Heart right ventricle (tissue), 16 donors: ENCODE measurements at regions of chr4 and their contacts with region 1.

Region 1: GRCh38 chr4:140839888-140840790 is 84.0 kb upstream of the TBC1D9 start:
- DNase-seq: no peak
- ATAC-seq: peak in 4 of 8 donors; percentile 27 to 73 (median 45)
- H3K4me3 ChIP-seq: no peak overlapping the region
- H3K27ac ChIP-seq: peak overlapping the region in 3 of 10 donors; percentile 19 to 36 (median 24)
- H3K4me1 ChIP-seq: peaks cover 0 to 31% (median 7%) of the 10 kb centered on the region in 9 donors
- H3K27me3 ChIP-seq: no peaks in the 10 kb centered on the region
- CTCF ChIP-seq: no peak

Region 2: GRCh38 chr4:140359562-140360427 is 480.3 kb before region 1 on chr4:
- intact Hi-C with region 1: loop called in 1 of 10 experiments (anchors 10 kb)
- DNase-seq: peak; percentile 29 to 69
- ATAC-seq: peak; percentile 59 to 89 (median 82)
- H3K4me3 ChIP-seq: no peak overlapping the region
- H3K27ac ChIP-seq: no peak overlapping the region
- H3K4me1 ChIP-seq: peaks cover 0 to 7% (median 0%) of the 10 kb centered on the region in 9 donors
- H3K27me3 ChIP-seq: peaks cover 0 to 7% (median 0%) of the 10 kb centered on the region in 7 donors
- CTCF ChIP-seq: peak; percentile 58 to 85 (median 77)

Region 3: DNA sequence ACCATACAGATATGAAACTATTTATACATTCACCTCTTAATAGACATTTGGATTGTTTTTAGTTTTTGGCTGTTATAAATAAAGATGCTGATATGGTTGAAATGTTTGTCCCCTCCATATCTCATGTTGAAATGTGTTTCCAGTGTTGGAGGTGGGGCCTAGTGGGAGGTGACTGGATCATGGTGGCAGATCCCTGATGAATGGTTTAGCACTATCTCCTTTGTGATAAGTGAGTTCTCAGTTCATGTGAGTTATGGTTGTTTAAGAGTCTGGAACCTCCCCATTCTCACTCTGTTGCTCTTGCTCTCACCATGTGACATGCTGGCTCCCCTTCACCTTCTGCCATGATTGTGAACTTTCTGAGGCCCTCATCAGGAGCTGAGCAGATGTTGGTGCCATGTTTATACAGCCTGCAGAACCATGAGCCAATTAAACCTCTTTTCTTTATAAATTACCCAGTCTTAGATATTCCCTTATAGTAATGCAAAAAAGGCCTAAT is 400.4 kb before region 1 on chr4:
- intact Hi-C with region 1: loop called in 1 of 10 experiments (anchors 5 kb)
- DNase-seq: no peak
- ATAC-seq: no peak
- H3K4me3 ChIP-seq: no peak overlapping the region
- H3K27ac ChIP-seq: no peak overlapping the region
- H3K4me1 ChIP-seq: no peaks in the 10 kb centered on the region
- H3K27me3 ChIP-seq: no peaks in the 10 kb centered on the region
- CTCF ChIP-seq: no peak

Region 4: GRCh38 chr4:140609548-140610425 is 230.4 kb before region 1 on chr4:
- intact Hi-C with region 1: loop called in 1 of 10 experiments (anchors 10 kb)
- DNase-seq: no peak
- ATAC-seq: peak; percentile 74 to 90 (median 86)
- H3K4me3 ChIP-seq: peak overlapping the region in 1 of 10 donors; percentile 4
- H3K27ac ChIP-seq: peak overlapping the region in 8 of 10 donors; percentile 17 to 75 (median 39)
- H3K4me1 ChIP-seq: peaks cover 0 to 14% (median 4%) of the 10 kb centered on the region in 9 donors
- H3K27me3 ChIP-seq: no peaks in the 10 kb centered on the region
- CTCF ChIP-seq: peak; percentile 42 to 74 (median 62)

Region 5: DNA sequence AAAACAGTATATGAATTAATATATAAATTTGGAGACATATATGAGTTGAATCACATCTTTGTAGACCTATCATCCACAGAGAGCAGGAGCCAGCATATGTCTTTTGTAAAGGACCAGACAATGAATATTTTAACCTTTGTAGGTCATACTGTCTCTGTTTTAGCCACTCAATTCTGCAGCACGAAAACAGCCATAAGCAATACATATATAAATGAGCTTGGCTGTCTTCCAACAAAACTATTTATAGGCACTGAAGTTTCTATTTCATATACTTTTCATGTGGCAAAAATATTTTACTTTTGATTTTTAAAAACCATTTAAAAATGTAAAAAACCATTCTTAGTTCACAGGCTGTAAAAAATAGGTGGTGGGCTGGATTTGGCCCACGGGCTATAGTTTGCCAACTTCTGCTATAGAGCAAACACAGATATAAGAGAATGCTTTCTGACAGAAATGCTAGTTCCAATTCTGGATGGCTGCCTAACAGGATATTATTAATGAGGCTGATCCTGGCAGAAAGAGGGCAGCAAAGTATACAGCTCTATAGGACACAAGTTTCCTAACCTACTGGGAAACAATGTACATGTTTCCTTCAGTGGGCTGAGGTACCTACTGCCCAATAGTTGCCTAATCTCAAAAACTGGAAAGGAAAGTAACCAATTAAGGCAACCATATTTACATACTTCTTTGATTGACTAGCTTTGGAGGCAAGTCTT is 213.3 kb before region 1 on chr4:
- intact Hi-C with region 1: loop called in 2 of 10 experiments (anchors 10 kb)
- DNase-seq: no peak
- ATAC-seq: no peak
- H3K4me3 ChIP-seq: no peak overlapping the region
- H3K27ac ChIP-seq: no peak overlapping the region
- H3K4me1 ChIP-seq: no peaks in the 10 kb centered on the region
- H3K27me3 ChIP-seq: no peaks in the 10 kb centered on the region
- CTCF ChIP-seq: no peak

Region 6: DNA sequence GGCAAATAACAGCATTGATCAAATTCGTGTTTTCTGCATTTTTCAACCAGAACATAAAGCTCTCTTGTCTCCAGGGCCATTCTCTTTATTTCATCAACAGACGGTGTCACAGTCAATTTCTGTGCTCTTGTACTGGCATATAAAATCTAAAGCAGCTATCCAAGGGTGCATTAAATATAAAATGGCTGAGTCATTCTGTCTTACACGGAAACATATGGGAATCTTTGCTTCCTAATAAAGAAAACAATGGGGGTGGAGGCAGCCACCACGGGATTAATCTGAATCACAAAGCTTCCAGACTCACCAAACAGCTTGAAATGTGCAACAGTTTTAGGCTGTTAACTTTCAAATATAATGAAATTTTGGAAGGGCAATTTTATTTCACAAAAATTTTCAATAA is 928.8 kb after region 1 on chr4:
- intact Hi-C with region 1: no loop called
- DNase-seq: no peak
- ATAC-seq: no peak
- H3K4me3 ChIP-seq: no peak overlapping the region
- H3K27ac ChIP-seq: no peak overlapping the region
- H3K4me1 ChIP-seq: no peaks in the 10 kb centered on the region
- H3K27me3 ChIP-seq: no peaks in the 10 kb centered on the region
- CTCF ChIP-seq: no peak